Thyroid gland (tissue), 4 donors: ENCODE measurements at regions of chr11 and their contacts with region 1.

Region 1: GRCh38 chr11:123429913-123430720 is at the start of gene GRAMD1B:
- DNase-seq: peak; percentile 57
- H3K4me3 ChIP-seq: peak within 1 kb of the TSS; percentile 32 to 71 (median 68)
- H3K27ac ChIP-seq: peak within 1 kb of the TSS; percentile 31 to 84 (median 54)
- H3K4me1 ChIP-seq: peaks cover 0 to 5% of the 10 kb centered on the region in 2 donors
- H3K27me3 ChIP-seq: no peaks in the 10 kb centered on the region
- CTCF ChIP-seq: peak in 1 of 6 experiments; percentile 13
- POLR2A ChIP-seq: no peak
- total RNA-seq, gene GRAMD1B: 7.0 to 22.7 (median 9.2) TPM

Region 2: DNA sequence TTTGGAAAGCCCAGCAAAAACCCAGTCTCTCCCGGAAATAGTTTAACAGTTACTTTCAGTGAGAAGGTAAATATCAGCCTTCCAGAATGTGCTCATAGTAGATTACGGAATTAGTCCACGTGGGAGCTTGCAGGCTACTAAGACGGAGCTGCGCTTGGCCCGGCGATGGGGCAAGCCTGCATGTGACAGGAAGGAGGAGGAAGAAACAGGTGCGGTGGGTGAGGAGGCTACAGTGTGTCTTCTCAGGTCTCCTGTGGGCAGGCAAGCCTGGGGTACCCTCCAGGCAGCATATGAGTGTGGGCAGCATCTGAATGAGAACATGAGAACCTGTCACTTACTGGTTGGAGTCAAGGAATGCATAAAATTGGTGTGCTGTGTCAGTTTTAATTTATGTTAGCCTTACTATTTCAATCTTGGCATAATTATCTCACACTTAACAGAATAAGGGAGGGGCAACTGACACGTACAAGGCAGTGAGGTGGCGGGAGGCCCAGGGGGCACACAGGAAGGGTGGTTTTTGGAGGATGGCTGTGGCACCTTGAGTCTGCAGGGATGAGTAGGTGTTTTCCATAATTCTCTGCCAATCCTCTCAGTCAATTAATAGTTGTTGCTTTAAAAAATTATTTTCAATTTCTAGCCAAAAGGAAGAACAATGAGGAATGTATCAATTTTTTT is 270.8 kb before region 1 on chr11:
- intact Hi-C with region 1: no loop called
- DNase-seq: no peak
- H3K4me3 ChIP-seq: no peak overlapping the region
- H3K27ac ChIP-seq: no peak overlapping the region
- H3K4me1 ChIP-seq: no peaks in the 10 kb centered on the region
- H3K27me3 ChIP-seq: no peaks in the 10 kb centered on the region
- CTCF ChIP-seq: no peak
- POLR2A ChIP-seq: no peak

Region 3: GRCh38 chr11:123183391-123184099 is 246.6 kb before region 1 on chr11:
- intact Hi-C with region 1: no loop called
- DNase-seq: no peak
- H3K4me3 ChIP-seq: no peak overlapping the region
- H3K27ac ChIP-seq: no peak overlapping the region
- H3K4me1 ChIP-seq: peaks cover 0 to 7% of the 10 kb centered on the region in 2 donors
- H3K27me3 ChIP-seq: no peaks in the 10 kb centered on the region
- CTCF ChIP-seq: no peak
- POLR2A ChIP-seq: no peak

Region 4: GRCh38 chr11:123461164-123461563 is 31.0 kb after region 1 on chr11:
- intact Hi-C with region 1: loop called (anchors 5 kb)
- DNase-seq: peak in 1 of 2 donors; percentile 14
- H3K4me3 ChIP-seq: no peak overlapping the region
- H3K27ac ChIP-seq: no peak overlapping the region
- H3K4me1 ChIP-seq: peaks cover 0 to 12% of the 10 kb centered on the region in 2 donors
- H3K27me3 ChIP-seq: no peaks in the 10 kb centered on the region
- CTCF ChIP-seq: no peak
- POLR2A ChIP-seq: no peak

Region 5: GRCh38 chr11:124481365-124482323 is 1051.5 kb after region 1 on chr11:
- intact Hi-C with region 1: no loop called
- DNase-seq: peak; percentile 45 to 61
- H3K4me3 ChIP-seq: peak overlapping the region in 1 of 3 donors; percentile 11
- H3K27ac ChIP-seq: no peak overlapping the region
- H3K4me1 ChIP-seq: no peaks in the 10 kb centered on the region
- H3K27me3 ChIP-seq: no peaks in the 10 kb centered on the region
- CTCF ChIP-seq: no peak
- POLR2A ChIP-seq: no peak